Activated T-helper 1 cell treated with anti-CD3 and anti-CD28 coated beads, Interleukin-12 subunit alpha, Interleukin-12 subunit beta, Interleukin-2, Interleukin-4 antibody, amounts not matched to agents 30 ng/mL and 10 ng/mL and 1 ng/mL, durations not matched to agents 14 hours and 24 hours and 36 hours (primary cell): ENCODE measurements at regions of chrX and their contacts with region 1.

Region 1: DNA sequence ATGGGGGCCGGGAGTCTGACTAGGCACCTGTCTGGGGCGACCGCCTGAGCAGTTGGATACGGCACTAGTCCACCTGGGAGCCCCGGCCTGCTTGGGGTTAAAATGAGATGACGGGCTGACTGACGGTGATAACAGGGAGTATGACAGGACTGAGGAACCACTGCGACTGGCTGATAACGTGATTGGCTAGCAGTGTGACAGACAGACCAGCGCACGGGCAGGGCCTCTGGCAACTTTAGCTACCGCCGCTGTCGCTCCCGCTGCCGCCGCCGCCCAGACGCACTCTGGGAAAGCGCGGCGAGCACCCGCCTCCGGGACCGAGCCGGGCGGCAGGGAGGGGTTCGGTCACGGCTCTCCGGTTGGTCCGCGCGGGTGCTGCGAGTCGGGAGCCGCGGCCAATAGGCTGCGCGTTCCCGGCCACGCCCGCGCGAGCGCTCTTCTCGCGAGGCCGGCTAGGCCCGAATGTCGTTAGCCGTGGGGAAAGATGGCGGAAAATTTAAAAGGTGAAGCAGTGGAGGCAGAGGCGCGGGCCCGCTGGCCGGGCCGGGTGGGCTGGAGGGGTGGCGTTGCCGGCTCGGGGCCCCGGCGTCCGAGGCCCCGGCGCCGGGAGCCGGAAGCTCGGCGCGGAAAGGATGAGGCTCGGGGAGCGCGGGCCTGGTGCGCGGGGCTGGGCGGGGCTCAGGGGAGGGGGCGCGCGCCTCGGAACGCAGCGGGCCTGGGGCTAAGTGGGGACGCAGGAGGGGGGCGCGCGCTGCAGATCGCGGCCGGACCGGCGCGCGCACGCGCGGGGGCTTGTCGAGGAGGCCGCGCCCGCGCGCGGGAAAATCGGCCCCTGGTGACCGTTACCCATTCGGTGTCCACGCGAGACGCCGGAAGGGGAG is at the start of gene SUV39H1:
- DNase-seq: peak; percentile 85
- H3K4me3 Mint-ChIP-seq: peak within 1 kb of the TSS; percentile 93
- H3K27ac Mint-ChIP-seq: peak within 1 kb of the TSS; percentile 91
- H3K4me1 Mint-ChIP-seq: peaks cover 35% of the 10 kb centered on the region
- H3K27me3 Mint-ChIP-seq: peaks cover 2% of the 10 kb centered on the region
- total RNA-seq, gene SUV39H1: 27.5 and 27.7 TPM in 2 replicates

Region 2: GRCh38 chrX:48676106-48676892 is 20.2 kb before region 1 on chrX:
- intact Hi-C with region 1: loop called (anchors 1 kb)
- DNase-seq: peak; percentile 87
- H3K4me3 Mint-ChIP-seq: peak overlapping the region; percentile 86
- H3K27ac Mint-ChIP-seq: peak overlapping the region; percentile 88
- H3K4me1 Mint-ChIP-seq: peaks cover 20% of the 10 kb centered on the region
- H3K27me3 Mint-ChIP-seq: no peaks in the 10 kb centered on the region

Region 3: DNA sequence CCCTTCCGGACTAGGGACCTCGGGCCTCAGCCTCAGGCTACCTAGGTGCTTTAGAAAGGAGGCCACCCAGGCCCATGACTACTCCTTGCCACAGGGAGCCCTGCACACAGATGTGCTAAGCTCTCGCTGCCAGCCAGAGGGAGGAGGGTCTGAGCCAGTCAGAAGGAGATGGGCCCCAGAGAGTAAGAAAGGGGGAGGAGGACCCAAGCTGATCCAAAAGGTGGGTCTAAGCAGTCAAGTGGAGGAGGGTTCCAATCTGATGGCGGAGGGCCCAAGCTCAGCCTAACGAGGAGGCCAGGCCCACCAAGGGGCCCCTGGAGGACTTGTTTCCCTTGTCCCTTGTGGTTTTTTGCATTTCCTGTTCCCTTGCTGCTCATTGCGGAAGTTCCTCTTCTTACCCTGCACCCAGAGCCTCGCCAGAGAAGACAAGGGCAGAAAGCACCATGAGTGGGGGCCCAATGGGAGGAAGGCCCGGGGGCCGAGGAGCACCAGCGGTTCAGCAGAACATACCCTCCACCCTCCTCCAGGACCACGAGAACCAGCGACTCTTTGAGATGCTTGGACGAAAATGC is 13.0 kb before region 1 on chrX and contains the start of gene WAS:
- intact Hi-C with region 1: loop called (anchors 1 kb)
- DNase-seq: peak; percentile 41
- H3K4me3 Mint-ChIP-seq: peak within 1 kb of the TSS; percentile 96
- H3K27ac Mint-ChIP-seq: peak within 1 kb of the TSS; percentile 93
- H3K4me1 Mint-ChIP-seq: peaks cover 55% of the 10 kb centered on the region
- H3K27me3 Mint-ChIP-seq: no peaks in the 10 kb centered on the region
- total RNA-seq, gene WAS: 106 and 122 TPM in 2 replicates

Region 4: GRCh38 chrX:48714573-48714972 is 18.0 kb after region 1 on chrX:
- intact Hi-C with region 1: loop called (anchors 1 kb)
- DNase-seq: no peak
- H3K4me3 Mint-ChIP-seq: peak overlapping the region; percentile 50
- H3K27ac Mint-ChIP-seq: peak overlapping the region; percentile 84
- H3K4me1 Mint-ChIP-seq: peaks cover 75% of the 10 kb centered on the region
- H3K27me3 Mint-ChIP-seq: no peaks in the 10 kb centered on the region

Region 5: GRCh38 chrX:48957827-48958634 is 261.5 kb after region 1 on chrX:
- intact Hi-C with region 1: loop called (anchors 1 kb)
- DNase-seq: peak; percentile 90
- H3K4me3 Mint-ChIP-seq: peak overlapping the region; percentile 98
- H3K27ac Mint-ChIP-seq: peak overlapping the region; percentile 100
- H3K4me1 Mint-ChIP-seq: peaks cover 33% of the 10 kb centered on the region
- H3K27me3 Mint-ChIP-seq: no peaks in the 10 kb centered on the region